CD8-positive, alpha-beta T cell (primary cell): ENCODE measurements at regions of chr3 and their contacts with region 1.

Region 1: DNA sequence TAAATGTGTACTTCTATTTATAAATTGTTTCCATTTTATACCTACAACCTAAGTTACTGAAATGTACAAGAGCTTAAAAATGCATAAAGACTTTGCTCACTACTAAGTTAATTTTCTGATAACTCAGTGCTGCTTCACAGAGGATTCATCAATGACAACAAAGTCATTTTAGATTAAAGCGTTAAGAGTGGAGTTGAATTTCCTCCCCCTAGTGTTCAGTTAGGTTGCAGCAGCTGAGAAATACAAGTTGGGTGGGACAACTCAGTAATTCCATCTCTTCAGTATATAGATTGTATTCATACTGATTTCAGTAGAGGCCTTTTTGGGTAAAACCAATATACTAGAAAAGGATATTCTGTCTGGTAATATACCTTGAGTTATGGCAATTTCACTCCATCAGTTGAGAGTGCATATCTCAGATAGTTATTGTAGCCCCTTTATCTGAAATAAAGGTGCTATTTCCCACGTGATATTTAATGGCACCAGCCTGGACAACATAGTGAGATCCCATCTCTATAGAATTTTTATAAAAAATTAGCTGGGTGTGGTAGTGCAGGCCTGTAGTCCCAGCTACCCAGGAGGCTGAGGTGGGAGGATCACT is 6.9 kb upstream of the RPL35A start:
- DNase-seq: peak in 3 of 9 experiments; percentile 23 to 71 (median 62)
- ATAC-seq: peak; percentile 94
- H3K4me3 ChIP-seq: no peak overlapping the region
- H3K4me3 Mint-ChIP-seq: no peak overlapping the region
- H3K27ac ChIP-seq: no peak overlapping the region
- H3K27ac Mint-ChIP-seq: no peak overlapping the region
- H3K4me1 ChIP-seq: no peaks in the 10 kb centered on the region
- H3K4me1 Mint-ChIP-seq: peaks cover 2% of the 10 kb centered on the region
- H3K27me3 ChIP-seq: no peaks in the 10 kb centered on the region
- H3K27me3 Mint-ChIP-seq: no peaks in the 10 kb centered on the region
- CTCF ChIP-seq: peak; percentile 83

Region 2: DNA sequence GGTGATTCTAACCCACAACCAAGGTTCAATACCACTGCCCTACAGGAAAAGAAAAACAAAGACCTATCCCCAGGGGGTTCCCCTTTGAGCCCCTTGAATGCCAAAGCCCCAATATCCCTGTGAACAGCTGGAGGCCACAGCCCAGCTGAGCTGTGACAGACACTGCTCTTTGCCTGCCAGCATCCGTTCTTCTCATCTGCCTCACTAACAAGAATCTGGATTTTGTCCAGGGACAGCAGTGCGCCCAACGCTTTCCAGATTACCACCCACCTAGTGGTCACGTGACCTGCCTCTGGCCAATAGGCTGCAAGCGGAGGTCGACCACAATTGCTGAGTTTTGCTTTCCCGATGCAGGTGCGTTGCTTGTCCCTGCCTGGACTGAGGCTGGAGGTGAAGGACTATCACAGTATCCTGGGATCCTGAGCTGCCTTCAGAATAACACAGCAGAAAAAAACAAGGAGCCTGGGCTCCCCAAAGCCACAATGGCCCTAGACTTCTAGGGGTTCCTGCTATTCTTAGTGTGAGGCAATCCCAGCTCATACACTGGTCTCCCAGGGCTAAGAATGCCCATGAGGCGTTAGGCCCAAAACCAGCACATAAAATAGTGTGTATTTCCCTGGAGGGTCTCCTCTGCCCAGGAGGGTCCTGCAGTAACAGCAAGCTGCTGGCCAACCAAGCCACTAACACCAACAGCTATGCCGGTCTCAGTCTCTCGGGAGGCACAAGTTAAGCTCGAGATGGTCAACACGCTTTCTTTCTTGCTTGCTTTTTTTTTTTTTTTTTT is 401.1 kb before region 1 on chr3:
- CTCF ChIA-PET with region 1: no interaction called
- POLR2A ChIA-PET with region 1: no interaction called
- intact Hi-C with region 1: no loop called
- DNase-seq: no peak
- ATAC-seq: no peak
- H3K4me3 ChIP-seq: no peak overlapping the region
- H3K4me3 Mint-ChIP-seq: no peak overlapping the region
- H3K27ac ChIP-seq: no peak overlapping the region
- H3K27ac Mint-ChIP-seq: no peak overlapping the region
- H3K4me1 ChIP-seq: no peaks in the 10 kb centered on the region
- H3K4me1 Mint-ChIP-seq: no peaks in the 10 kb centered on the region
- H3K27me3 ChIP-seq: no peaks in the 10 kb centered on the region
- H3K27me3 Mint-ChIP-seq: no peaks in the 10 kb centered on the region
- CTCF ChIP-seq: no peak

Region 3: DNA sequence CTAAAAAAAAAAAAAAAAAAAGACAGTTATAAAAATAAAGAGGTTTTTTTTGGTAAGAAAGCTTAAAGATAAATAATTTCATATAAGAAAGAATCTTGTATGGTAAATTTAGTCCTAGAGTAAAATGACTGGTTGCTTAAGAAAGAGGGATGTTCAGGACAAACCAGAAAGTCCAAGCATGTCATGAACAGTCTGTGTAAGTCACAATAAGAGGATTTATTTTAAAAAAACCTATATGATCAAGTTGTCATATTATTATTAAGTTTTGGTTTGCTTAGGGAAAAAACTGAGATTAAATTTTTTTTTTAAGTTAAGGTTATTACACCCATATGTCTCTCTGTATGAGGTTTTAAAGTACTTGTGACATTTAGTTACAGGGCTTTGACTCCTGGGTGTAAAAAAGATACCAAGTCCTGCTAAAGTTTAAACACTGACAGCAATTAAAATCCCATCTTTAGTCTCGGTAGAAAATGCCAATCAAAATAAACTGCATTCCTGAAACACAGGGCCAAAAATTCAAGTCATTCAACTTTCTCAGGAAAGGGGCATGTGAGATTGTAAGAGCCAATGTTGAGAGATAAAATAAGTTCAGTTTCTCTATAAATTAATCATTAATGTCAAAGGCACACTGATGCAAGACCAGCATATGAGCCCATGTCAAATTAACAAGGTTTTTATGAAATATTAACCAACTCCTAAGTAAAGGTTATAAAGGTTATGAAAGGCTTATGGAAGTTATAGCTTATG is 378.8 kb before region 1 on chr3:
- CTCF ChIA-PET with region 1: no interaction called
- POLR2A ChIA-PET with region 1: no interaction called
- intact Hi-C with region 1: no loop called
- DNase-seq: no peak
- ATAC-seq: no peak
- H3K4me3 ChIP-seq: no peak overlapping the region
- H3K4me3 Mint-ChIP-seq: no peak overlapping the region
- H3K27ac ChIP-seq: no peak overlapping the region
- H3K27ac Mint-ChIP-seq: no peak overlapping the region
- H3K4me1 ChIP-seq: no peaks in the 10 kb centered on the region
- H3K4me1 Mint-ChIP-seq: peaks cover 3% of the 10 kb centered on the region
- H3K27me3 ChIP-seq: peaks cover 0 to 4% of the 10 kb centered on the region in 2 experiments
- H3K27me3 Mint-ChIP-seq: peaks cover 15% of the 10 kb centered on the region
- CTCF ChIP-seq: no peak

Region 4: DNA sequence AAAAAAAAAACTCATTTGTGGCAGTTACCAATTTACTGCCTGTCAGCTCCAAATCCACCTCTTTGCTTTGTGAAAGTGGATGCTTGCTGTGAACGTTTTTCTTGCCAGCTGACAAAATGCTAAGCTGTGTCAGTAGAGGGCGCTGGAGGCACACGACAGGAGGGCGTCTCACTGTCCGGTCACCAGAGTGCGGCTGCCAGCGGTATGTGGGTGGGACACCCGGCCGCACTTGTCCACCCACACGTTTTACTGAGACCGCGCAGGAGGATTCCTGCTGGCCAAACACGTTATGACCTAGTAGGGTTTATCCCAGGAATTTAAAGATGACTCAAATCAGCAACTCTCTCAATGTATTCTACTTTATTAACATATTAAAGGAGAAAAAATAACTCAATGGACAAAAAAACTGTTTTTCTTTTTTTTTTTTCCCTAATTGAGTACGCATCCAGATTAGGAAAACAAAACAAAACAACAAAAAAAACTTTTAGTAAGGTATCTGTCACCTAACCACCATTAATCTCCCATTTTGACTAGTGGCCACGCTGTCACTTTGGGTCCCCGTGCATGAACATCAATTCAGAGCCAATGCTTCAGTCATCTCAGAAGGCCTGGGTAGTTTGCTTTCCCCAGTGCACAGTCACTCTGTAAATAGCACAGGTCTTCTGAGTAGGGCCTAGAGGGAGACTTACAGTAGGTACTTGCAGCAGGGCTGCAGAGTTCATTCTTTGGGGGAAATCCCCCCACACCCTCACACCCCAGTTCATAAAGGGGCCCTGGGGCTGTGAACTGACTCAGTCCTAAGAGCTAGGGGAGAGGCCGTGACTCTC is 36.8 kb before region 1 on chr3:
- CTCF ChIA-PET with region 1: interaction called, 12 read pairs
- POLR2A ChIA-PET with region 1: no interaction called
- intact Hi-C with region 1: loop called (anchors 1 kb)
- DNase-seq: peak; percentile 60 to 85 (median 75)
- ATAC-seq: peak; percentile 77
- H3K4me3 ChIP-seq: no peak overlapping the region
- H3K4me3 Mint-ChIP-seq: no peak overlapping the region
- H3K27ac ChIP-seq: no peak overlapping the region
- H3K27ac Mint-ChIP-seq: no peak overlapping the region
- H3K4me1 ChIP-seq: no peaks in the 10 kb centered on the region
- H3K4me1 Mint-ChIP-seq: peaks cover 8% of the 10 kb centered on the region
- H3K27me3 ChIP-seq: no peaks in the 10 kb centered on the region
- H3K27me3 Mint-ChIP-seq: no peaks in the 10 kb centered on the region
- CTCF ChIP-seq: peak; percentile 93

Region 5: GRCh38 chr3:197926418-197926817 is 16.6 kb before region 1 on chr3:
- CTCF ChIA-PET with region 1: interaction called, 11 read pairs
- POLR2A ChIA-PET with region 1: no interaction called
- intact Hi-C with region 1: no loop called
- DNase-seq: no peak
- ATAC-seq: no peak
- H3K4me3 ChIP-seq: no peak overlapping the region
- H3K4me3 Mint-ChIP-seq: no peak overlapping the region
- H3K27ac ChIP-seq: no peak overlapping the region
- H3K27ac Mint-ChIP-seq: no peak overlapping the region
- H3K4me1 ChIP-seq: no peaks in the 10 kb centered on the region
- H3K4me1 Mint-ChIP-seq: no peaks in the 10 kb centered on the region
- H3K27me3 ChIP-seq: no peaks in the 10 kb centered on the region
- H3K27me3 Mint-ChIP-seq: no peaks in the 10 kb centered on the region
- CTCF ChIP-seq: no peak

Region 6: GRCh38 chr3:197983076-197983475 is 40.0 kb after region 1 on chr3:
- CTCF ChIA-PET with region 1: no interaction called
- POLR2A ChIA-PET with region 1: no interaction called
- intact Hi-C with region 1: no loop called
- DNase-seq: no peak
- ATAC-seq: no peak
- H3K4me3 ChIP-seq: no peak overlapping the region
- H3K4me3 Mint-ChIP-seq: no peak overlapping the region
- H3K27ac ChIP-seq: no peak overlapping the region
- H3K27ac Mint-ChIP-seq: no peak overlapping the region
- H3K4me1 ChIP-seq: peaks cover 9% of the 10 kb centered on the region
- H3K4me1 Mint-ChIP-seq: peaks cover 13% of the 10 kb centered on the region
- H3K27me3 ChIP-seq: no peaks in the 10 kb centered on the region
- H3K27me3 Mint-ChIP-seq: no peaks in the 10 kb centered on the region
- CTCF ChIP-seq: no peak

Region 7: GRCh38 chr3:197997936-197998335 is 54.9 kb after region 1 on chr3:
- CTCF ChIA-PET with region 1: no interaction called
- POLR2A ChIA-PET with region 1: no interaction called
- intact Hi-C with region 1: no loop called
- DNase-seq: no peak
- ATAC-seq: no peak
- H3K4me3 ChIP-seq: no peak overlapping the region
- H3K4me3 Mint-ChIP-seq: no peak overlapping the region
- H3K27ac ChIP-seq: no peak overlapping the region
- H3K27ac Mint-ChIP-seq: no peak overlapping the region
- H3K4me1 ChIP-seq: no peaks in the 10 kb centered on the region
- H3K4me1 Mint-ChIP-seq: no peaks in the 10 kb centered on the region
- H3K27me3 ChIP-seq: no peaks in the 10 kb centered on the region
- H3K27me3 Mint-ChIP-seq: no peaks in the 10 kb centered on the region
- CTCF ChIP-seq: no peak